Dorsolateral prefrontal cortex (tissue), 120 donors: ENCODE measurements at regions of chr1 and their contacts with region 1.

Region 1: GRCh38 chr1:155871390-155871789 is 12.0 kb downstream of the SYT11 start:
- DNase-seq: peak; percentile 77 to 94 (median 91)
- H3K4me3 ChIP-seq: peak overlapping the region in 51 of 59 donors; percentile 6 to 52 (median 32)
- H3K27ac ChIP-seq: peak overlapping the region in 58 of 59 donors; percentile 47 to 93 (median 86)
- H3K27me3 ChIP-seq: no peaks in the 10 kb centered on the region
- CTCF ChIP-seq: peak in 2 of 56 donors; percentile 7 to 26

Region 2: DNA sequence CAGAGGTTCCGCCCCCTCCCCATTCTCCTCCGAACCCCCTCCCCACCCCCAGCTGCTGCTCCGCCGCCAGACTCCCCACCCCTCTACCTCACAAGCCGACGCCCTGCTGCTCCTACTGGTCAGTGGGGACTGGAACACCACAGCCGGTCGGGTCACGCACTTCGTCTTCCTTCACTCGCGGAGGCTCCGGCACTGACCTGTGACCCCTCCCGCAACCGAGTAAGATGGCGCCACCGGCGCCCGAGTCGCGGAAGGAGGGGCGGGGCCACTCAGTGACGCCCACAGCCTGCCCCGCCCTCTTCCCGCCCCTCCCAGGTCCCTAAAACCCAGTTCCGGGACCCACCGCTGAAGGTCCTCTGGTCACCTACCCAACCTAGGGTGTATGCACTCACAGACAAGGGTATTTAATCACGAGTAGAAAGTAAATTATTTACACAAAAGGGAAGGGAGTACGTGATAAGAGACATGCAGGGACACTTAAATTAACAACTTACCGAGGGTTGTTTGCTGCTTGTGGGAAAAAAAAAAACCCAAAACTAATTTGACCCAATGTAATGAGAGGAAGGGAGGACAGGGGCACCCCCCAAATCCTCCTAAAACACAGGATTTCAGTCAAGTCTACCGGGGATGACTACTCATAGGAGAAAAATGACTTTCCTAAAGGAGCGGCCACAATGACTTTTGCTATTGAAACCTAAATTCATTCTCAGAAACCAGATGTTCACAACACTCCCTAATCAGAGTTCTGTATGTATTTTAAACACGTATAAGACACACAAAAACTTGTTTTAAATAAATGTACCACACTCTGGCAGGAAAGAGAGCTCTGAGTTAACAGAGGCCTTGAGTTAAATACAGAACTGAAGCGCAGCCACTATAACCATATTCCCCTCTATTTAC is 40.0 kb after region 1 on chr1 and contains the start of gene RIT1:
- intact Hi-C with region 1: loop called in 1 of 2 experiments (anchors 5 kb)
- DNase-seq: peak; percentile 73 to 89 (median 78)
- H3K4me3 ChIP-seq: peak within 1 kb of the TSS; percentile 42 to 92 (median 79)
- H3K27ac ChIP-seq: peak within 1 kb of the TSS; percentile 76 to 97 (median 92)
- H3K27me3 ChIP-seq: no peaks in the 10 kb centered on the region
- CTCF ChIP-seq: peak in 14 of 56 donors; percentile 11 to 37 (median 20)
- total RNA-seq, gene RIT1: 13.3 to 34.9 (median 21.2) TPM

Region 3: DNA sequence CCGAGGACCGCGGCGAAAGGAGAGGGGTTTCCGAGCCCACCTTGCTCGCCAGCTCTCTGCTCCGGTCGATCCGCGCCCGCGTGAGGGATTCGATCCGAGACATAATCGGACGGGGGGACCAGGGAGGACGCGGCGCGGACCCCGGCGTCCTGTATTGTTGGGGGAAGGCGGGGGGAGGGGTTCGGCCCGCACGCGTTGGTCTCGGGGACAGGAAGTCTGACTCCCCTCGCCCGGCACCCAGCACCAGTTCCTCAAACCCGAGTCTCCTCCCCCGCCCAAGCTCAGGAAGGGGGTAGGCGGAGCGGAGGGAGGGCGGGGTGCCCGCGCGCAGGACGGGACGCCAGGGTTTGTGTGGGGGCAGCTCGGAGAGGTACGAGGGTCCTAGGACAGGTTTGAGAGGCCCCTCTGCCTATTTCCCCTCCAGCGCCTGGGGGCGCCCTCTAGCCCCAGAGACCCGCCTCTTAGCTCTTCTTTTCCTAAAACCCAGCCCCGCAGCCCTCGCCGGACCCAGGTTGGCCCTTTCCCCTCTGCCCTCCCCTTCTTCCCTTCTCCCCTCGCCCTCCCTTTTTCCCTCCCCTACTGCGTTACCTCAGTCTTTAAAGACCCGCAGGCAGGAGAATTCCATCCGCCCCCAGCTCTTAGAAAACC is 107.1 kb after region 1 on chr1 and contains the start of gene ARHGEF2:
- intact Hi-C with region 1: loop called in 1 of 2 experiments (anchors 5 kb)
- DNase-seq: peak in 8 of 10 donors; percentile 60 to 80 (median 72)
- H3K4me3 ChIP-seq: peak within 1 kb of the TSS; percentile 68 to 95 (median 86)
- H3K27ac ChIP-seq: peak within 1 kb of the TSS; percentile 87 to 100 (median 99)
- H3K27me3 ChIP-seq: no peaks in the 10 kb centered on the region
- CTCF ChIP-seq: peak in 49 of 56 donors; percentile 12 to 61 (median 43)
- total RNA-seq, gene ARHGEF2: 113 to 323 (median 165) TPM